Tibial artery (tissue), 4 donors: ENCODE measurements at regions of chr6 and their contacts with region 1.

Region 1: GRCh38 chr6:13614926-13615798 is at the start of gene NOL7:
- DNase-seq: peak; percentile 96 to 98
- H3K4me3 ChIP-seq: peak within 1 kb of the TSS; percentile 75 to 95
- H3K27ac ChIP-seq: peak within 1 kb of the TSS; percentile 92 to 96
- H3K4me1 ChIP-seq: peaks cover 0 to 25% (median 16%) of the 10 kb centered on the region in 4 donors
- H3K27me3 ChIP-seq: no peaks in the 10 kb centered on the region
- CTCF ChIP-seq: peak; percentile 86 to 94

Region 2: DNA sequence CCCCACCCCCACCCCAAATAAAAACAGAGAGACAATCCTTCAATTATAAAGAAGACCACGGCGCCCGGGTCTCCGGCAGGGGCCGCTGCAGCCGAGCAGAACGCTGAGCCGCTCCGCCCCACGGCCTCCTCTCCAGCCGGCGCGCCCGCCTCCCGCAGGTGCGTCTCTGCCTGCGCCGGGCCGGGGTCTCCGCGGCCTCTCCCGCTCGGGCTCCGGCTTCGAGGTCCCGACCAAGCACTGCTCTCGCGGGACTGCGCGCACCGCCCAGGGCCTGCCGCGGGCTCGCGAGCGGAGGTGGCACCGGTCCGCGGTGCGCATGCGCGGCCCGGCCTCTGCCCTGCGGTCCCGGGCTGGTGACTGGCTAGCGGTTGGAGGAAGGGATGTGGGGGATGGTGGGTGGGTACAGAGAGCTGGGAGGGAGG is 41.0 kb before region 1 on chr6:
- intact Hi-C with region 1: loop called (anchors 5 kb)
- DNase-seq: peak; percentile 91 to 96
- H3K4me3 ChIP-seq: peak overlapping the region; percentile 76 to 91
- H3K27ac ChIP-seq: peak overlapping the region; percentile 95 to 96
- H3K4me1 ChIP-seq: peaks cover 0 to 9% (median 6%) of the 10 kb centered on the region in 4 donors
- H3K27me3 ChIP-seq: peaks cover 0 to 1% of the 10 kb centered on the region in 2 donors
- CTCF ChIP-seq: peak; percentile 41 to 51

Region 3: DNA sequence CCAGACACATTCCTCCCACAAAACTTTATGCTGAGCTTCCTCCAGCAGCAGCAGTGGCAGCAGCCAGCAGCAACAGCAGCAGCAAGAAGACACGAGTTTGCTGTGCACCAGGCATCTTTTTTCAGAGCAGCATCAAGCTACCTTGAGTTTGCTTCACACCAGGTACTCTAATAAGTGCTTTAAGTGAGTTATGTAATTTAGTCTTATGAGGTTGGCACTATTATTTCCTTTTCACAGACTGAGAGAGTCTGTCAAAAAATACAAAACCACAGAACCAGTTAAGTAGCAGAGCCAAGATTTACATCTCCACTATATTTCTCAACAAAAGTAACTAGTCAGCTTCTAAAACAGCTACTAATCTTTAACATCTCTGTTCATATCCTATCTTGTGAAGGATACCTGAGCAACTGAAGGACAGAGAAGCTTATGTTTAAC is 72.8 kb after region 1 on chr6:
- intact Hi-C with region 1: no loop called
- DNase-seq: no peak
- H3K4me3 ChIP-seq: no peak overlapping the region
- H3K27ac ChIP-seq: no peak overlapping the region
- H3K4me1 ChIP-seq: peaks cover 0 to 44% (median 8%) of the 10 kb centered on the region in 4 donors
- H3K27me3 ChIP-seq: no peaks in the 10 kb centered on the region
- CTCF ChIP-seq: no peak

Region 4: GRCh38 chr6:14066782-14067406 is 451.7 kb after region 1 on chr6:
- intact Hi-C with region 1: no loop called
- DNase-seq: no peak
- H3K4me3 ChIP-seq: no peak overlapping the region
- H3K27ac ChIP-seq: no peak overlapping the region
- H3K4me1 ChIP-seq: no peaks in the 10 kb centered on the region
- H3K27me3 ChIP-seq: peaks cover 0 to 23% of the 10 kb centered on the region in 2 donors
- CTCF ChIP-seq: peak; percentile 54 to 68